PC-3 (cell line): ENCODE measurements at regions of chr2 and their contacts with region 1.

Region 1: GRCh38 chr2:100818606-100819369 is 1.2 kb upstream of the NPAS2 start:
- DNase-seq: peak; percentile 79
- ATAC-seq: peak; percentile 55
- H3K4me3 ChIP-seq: peak overlapping the region; percentile 76
- H3K27ac ChIP-seq: peak overlapping the region; percentile 93
- H3K4me1 ChIP-seq: peaks cover 36% of the 10 kb centered on the region
- H3K27me3 ChIP-seq: no peaks in the 10 kb centered on the region
- CTCF ChIP-seq: peak; percentile 60

Region 2: GRCh38 chr2:100281521-100282438 is 537.0 kb before region 1 on chr2:
- CTCF ChIA-PET with region 1: no interaction called
- POLR2A ChIA-PET with region 1: no interaction called
- intact Hi-C with region 1: no loop called
- DNase-seq: no peak
- ATAC-seq: no peak
- H3K4me3 ChIP-seq: no peak overlapping the region
- H3K27ac ChIP-seq: no peak overlapping the region
- H3K4me1 ChIP-seq: peaks cover 14% of the 10 kb centered on the region
- H3K27me3 ChIP-seq: no peaks in the 10 kb centered on the region
- CTCF ChIP-seq: no peak

Region 3: GRCh38 chr2:100610381-100610831 is 208.4 kb before region 1 on chr2:
- CTCF ChIA-PET with region 1: interaction called, 8 read pairs
- POLR2A ChIA-PET with region 1: no interaction called
- intact Hi-C with region 1: loop called (anchors 2 kb)
- DNase-seq: peak; percentile 82
- ATAC-seq: peak; percentile 78
- H3K4me3 ChIP-seq: no peak overlapping the region
- H3K27ac ChIP-seq: no peak overlapping the region
- H3K4me1 ChIP-seq: peaks cover 9% of the 10 kb centered on the region; the same call in 1 of the 2 replicates
- H3K27me3 ChIP-seq: no peaks in the 10 kb centered on the region
- CTCF ChIP-seq: peak; percentile 90

Region 4: DNA sequence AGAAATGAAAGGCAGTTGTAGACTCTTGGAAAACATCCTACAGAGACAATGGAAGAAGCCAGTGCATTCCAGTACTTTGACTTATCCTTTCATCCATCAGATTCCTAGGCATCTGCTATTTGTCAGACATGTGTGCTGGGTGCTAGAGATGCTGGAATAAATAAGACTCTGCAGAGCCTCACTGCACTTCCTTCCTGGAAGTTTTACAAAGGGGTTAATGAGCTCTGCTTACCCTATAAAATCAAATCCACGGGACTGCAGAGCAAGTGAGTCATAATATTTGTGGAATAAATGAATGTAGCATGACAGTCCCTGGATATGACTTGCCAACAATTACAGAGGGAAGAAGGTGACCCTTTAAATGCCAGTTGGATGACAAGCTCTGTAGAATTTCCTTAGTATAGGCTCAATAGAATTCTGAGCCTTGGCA is 51.5 kb before region 1 on chr2:
- CTCF ChIA-PET with region 1: interaction called, 6 read pairs
- POLR2A ChIA-PET with region 1: interaction called, 13 read pairs
- intact Hi-C with region 1: loop called (anchors 1 kb)
- DNase-seq: peak; percentile 97
- ATAC-seq: peak; percentile 79
- H3K4me3 ChIP-seq: peak overlapping the region; percentile 47
- H3K27ac ChIP-seq: peak overlapping the region; percentile 96
- H3K4me1 ChIP-seq: peaks cover 52% of the 10 kb centered on the region
- H3K27me3 ChIP-seq: no peaks in the 10 kb centered on the region
- CTCF ChIP-seq: no peak

Region 5: DNA sequence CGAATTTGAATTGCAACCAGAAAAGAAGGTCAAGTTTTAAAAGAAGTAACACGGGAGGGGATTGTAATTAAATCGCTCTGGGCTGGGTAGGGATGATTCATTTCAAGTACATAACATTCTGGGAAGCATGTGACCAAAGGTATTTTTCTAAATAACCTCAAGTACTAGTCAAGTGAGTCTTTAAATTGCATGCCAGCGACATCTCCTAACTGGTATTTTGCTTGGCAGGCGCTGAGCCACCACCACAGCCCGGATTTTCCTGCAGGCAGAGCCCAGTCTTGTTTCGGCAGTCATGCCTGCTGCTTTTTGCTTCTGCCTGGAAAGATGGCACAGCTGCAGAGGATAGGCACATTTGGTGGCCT is 32.5 kb before region 1 on chr2:
- CTCF ChIA-PET with region 1: no interaction called
- POLR2A ChIA-PET with region 1: interaction called, 14 read pairs
- intact Hi-C with region 1: loop called (anchors 1 kb)
- DNase-seq: peak; percentile 96
- ATAC-seq: peak; percentile 83
- H3K4me3 ChIP-seq: peak overlapping the region; percentile 49
- H3K27ac ChIP-seq: peak overlapping the region; percentile 91
- H3K4me1 ChIP-seq: peaks cover 51% of the 10 kb centered on the region
- H3K27me3 ChIP-seq: no peaks in the 10 kb centered on the region
- CTCF ChIP-seq: no peak

Region 6: DNA sequence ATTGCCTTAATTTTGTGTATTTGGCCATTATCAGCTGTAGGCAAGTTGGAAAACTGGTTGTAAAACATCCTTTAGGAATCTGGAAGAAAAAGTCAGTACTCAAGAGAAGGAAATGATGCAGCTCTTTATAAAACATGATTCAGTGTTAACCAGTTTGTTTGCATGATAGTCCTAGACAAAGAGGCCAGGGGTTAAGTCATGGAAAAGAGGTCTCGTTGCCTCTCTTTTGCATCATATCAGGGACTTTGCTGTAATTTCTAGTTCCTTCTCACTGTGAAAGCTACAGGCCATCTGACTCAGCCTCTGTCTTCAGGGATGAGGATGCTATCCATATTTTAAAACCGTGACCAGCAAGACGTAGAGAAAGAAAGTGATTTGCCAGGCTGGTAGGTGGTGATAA is 39.1 kb after region 1 on chr2:
- CTCF ChIA-PET with region 1: interaction called, 3 read pairs
- POLR2A ChIA-PET with region 1: interaction called, 15 read pairs
- intact Hi-C with region 1: no loop called
- DNase-seq: peak; percentile 83
- ATAC-seq: peak; percentile 64
- H3K4me3 ChIP-seq: peak overlapping the region; percentile 8; the same call in 1 of the 2 replicates
- H3K27ac ChIP-seq: peak overlapping the region; percentile 89
- H3K4me1 ChIP-seq: peaks cover 68% of the 10 kb centered on the region
- H3K27me3 ChIP-seq: no peaks in the 10 kb centered on the region
- CTCF ChIP-seq: no peak